Right cardiac atrium (tissue), 5 donors: ENCODE measurements at regions of chr1 and their contacts with region 1.

Region 1: GRCh38 chr1:89706700-89707012 is 73.7 kb downstream of the LRRC8C start:
- DNase-seq: no peak
- ATAC-seq: no peak
- H3K4me3 ChIP-seq: no peak overlapping the region
- H3K27ac ChIP-seq: no peak overlapping the region
- H3K4me1 ChIP-seq: peaks cover 2% of the 10 kb centered on the region
- H3K27me3 ChIP-seq: no peaks in the 10 kb centered on the region

Region 2: DNA sequence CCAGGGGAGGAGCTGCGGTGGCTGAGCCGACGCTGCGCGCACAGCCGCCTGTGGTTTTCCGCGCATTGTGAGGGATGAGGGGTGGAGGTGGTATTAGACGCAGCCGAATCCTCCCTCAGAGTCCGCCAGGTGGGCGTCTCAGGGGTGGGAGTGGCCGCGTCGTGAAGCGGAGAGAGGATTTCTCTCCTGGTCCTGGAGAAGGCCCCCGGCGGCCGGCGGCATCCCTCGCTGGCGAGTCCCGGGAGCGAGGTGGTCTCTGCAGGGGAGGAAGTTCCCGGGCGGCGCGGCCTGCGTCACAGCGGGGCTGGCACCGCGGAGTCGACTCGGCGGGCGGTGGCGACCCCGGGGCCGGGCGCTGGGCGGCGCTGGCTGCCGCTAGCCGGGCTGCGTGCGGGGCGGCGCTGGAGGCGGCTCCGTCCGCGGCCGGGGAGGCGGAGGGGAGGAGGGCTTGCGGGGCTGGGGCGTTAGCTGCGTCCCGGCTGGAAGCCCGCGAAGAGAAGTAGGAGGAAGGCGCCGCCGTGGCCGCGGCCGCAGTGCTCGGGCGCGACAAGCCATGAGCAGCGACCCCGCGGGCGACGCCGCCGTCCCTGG is 73.9 kb before region 1 on chr1 and contains the start of gene LRRC8C:
- intact Hi-C with region 1: loop called in 1 of 4 experiments (anchors 10 kb)
- DNase-seq: peak; percentile 89 to 96 (median 95)
- ATAC-seq: peak; percentile 95 to 96
- H3K4me3 ChIP-seq: peak within 1 kb of the TSS; percentile 56
- H3K27ac ChIP-seq: peak within 1 kb of the TSS; percentile 95
- H3K4me1 ChIP-seq: no peaks in the 10 kb centered on the region
- H3K27me3 ChIP-seq: no peaks in the 10 kb centered on the region
- total RNA-seq, gene LRRC8C: 5.9 to 10.6 (median 6.9) TPM

Region 3: DNA sequence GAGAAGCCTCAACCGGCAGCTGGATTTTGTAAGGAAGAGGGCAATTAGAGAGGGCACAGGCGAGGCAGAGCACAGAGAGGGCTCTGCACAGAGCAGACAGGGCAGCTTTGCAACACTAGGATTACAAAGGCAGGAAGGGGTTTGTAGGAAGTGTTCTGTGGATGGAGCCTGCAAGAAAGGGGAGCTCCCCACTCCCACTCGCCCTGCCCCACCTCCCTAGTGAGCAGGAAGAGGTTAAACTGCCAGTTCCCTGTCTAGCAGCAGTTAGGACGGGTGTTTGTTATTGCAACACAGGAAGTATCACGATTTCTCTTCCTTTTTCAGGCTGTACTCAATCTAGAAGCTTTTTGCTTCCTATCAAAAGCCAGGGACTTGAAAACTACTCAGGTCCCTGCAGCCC is 50.9 kb after region 1 on chr1:
- intact Hi-C with region 1: loop called in 1 of 4 experiments (anchors 10 kb)
- DNase-seq: peak; percentile 43 to 73 (median 68)
- ATAC-seq: peak; percentile 71 to 80
- H3K4me3 ChIP-seq: no peak overlapping the region
- H3K27ac ChIP-seq: peak overlapping the region; percentile 57
- H3K4me1 ChIP-seq: peaks cover 9% of the 10 kb centered on the region
- H3K27me3 ChIP-seq: no peaks in the 10 kb centered on the region